ENCODE measurements at regions of chr17 and their contacts with region 1.

Region 1: DNA sequence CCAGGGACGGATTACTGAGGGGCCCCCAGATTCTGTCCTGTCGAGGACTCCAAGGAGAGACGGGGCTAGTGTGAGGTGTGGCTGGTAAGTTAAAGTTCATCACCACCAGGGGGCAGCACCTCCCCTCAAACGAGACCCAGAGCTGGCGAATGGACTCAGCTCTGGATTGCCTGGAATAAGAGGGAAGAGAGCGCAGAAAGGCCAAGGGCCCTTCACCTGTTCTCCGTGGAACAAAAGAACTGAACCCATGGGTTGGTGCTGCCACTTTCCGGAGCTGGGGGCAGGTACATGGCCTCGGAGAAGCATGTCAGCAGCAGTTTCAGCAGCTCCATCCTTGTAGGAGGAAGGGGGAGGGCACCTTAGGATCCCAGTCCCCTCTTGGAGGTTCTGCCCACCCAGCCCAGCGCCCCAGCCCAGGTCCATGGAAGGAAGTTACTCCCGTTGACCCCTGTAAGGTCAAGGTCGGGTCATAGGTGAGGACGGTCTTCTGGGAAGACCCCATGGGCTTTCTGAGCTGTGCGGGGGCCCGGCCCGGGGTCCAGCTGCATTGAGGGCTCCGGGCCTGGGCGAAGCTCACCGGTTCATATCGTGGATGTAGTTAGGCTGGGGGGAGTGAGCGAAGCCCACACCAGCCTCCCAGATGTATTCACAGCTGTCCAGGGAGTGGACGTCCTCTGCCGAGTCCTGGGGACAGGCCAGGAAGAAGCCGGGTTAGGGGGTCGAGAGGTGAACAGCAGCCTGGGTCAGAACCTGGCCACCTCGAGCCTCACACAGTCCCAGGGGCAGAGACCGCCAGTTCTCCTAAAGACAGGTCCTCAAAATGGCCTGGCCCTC is 10.7 kb downstream of the HID1 start:
- DNase-seq: peak; percentile 74 to 93 (median 82)
- ATAC-seq: peak; percentile 79
- H3K4me3 ChIP-seq: no peak overlapping the region
- H3K4me3 Mint-ChIP-seq: peak overlapping the region; percentile 14
- H3K27ac ChIP-seq: no peak overlapping the region
- H3K27ac Mint-ChIP-seq: no peak overlapping the region
- H3K4me1 ChIP-seq: peaks cover 17% of the 10 kb centered on the region
- H3K4me1 Mint-ChIP-seq: peaks cover 4% of the 10 kb centered on the region
- H3K27me3 ChIP-seq: no peaks in the 10 kb centered on the region
- H3K27me3 Mint-ChIP-seq: no peaks in the 10 kb centered on the region
- CTCF ChIP-seq: peak; percentile 83

Region 2: DNA sequence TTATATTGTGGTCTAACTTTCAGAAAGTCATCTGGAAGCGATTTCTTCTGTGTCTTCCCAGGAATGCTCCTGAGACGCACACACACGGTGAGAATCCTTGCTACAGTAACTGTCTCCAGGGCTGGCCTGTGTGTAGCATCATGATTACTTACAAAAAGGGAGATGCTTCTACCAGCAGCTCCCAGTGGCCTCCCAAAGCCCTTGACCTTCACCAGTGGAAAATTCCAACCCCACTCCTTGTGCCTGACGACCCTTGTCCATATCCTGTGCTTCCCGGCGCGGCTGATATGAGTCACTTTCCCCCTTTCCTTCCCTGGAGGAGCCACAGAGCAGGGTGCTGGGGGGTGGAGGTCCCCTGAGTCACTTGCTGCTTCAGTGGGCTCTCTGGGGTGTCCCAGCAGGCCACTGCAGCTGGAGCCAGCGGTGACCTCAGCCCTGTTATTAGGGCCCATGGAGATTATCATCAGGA is 163.6 kb before region 1 on chr17:
- CTCF ChIA-PET with region 1: no interaction called
- POLR2A ChIA-PET with region 1: no interaction called
- intact Hi-C with region 1: loop called (anchors 10 kb)
- DNase-seq: no peak
- ATAC-seq: no peak
- H3K4me3 ChIP-seq: no peak overlapping the region
- H3K4me3 Mint-ChIP-seq: no peak overlapping the region
- H3K27ac ChIP-seq: no peak overlapping the region
- H3K27ac Mint-ChIP-seq: no peak overlapping the region
- H3K4me1 ChIP-seq: no peaks in the 10 kb centered on the region
- H3K4me1 Mint-ChIP-seq: no peaks in the 10 kb centered on the region
- H3K27me3 ChIP-seq: no peaks in the 10 kb centered on the region
- H3K27me3 Mint-ChIP-seq: no peaks in the 10 kb centered on the region
- CTCF ChIP-seq: no peak

Region 3: GRCh38 chr17:74822939-74823367 is 138.9 kb before region 1 on chr17:
- CTCF ChIA-PET with region 1: no interaction called
- POLR2A ChIA-PET with region 1: no interaction called
- intact Hi-C with region 1: no loop called
- DNase-seq: no peak
- ATAC-seq: no peak
- H3K4me3 ChIP-seq: no peak overlapping the region
- H3K4me3 Mint-ChIP-seq: no peak overlapping the region
- H3K27ac ChIP-seq: no peak overlapping the region
- H3K27ac Mint-ChIP-seq: no peak overlapping the region
- H3K4me1 ChIP-seq: no peaks in the 10 kb centered on the region
- H3K4me1 Mint-ChIP-seq: no peaks in the 10 kb centered on the region
- H3K27me3 ChIP-seq: no peaks in the 10 kb centered on the region
- H3K27me3 Mint-ChIP-seq: no peaks in the 10 kb centered on the region
- CTCF ChIP-seq: no peak

Region 4: GRCh38 chr17:74972107-74972972 is 10.5 kb after region 1 on chr17 and contains the start of gene HID1:
- CTCF ChIA-PET with region 1: interaction called, 22 read pairs
- POLR2A ChIA-PET with region 1: interaction called, 5 read pairs
- intact Hi-C with region 1: no loop called
- DNase-seq: peak; percentile 74 to 90 (median 81)
- ATAC-seq: peak; percentile 88
- H3K4me3 ChIP-seq: peak within 1 kb of the TSS; percentile 59
- H3K4me3 Mint-ChIP-seq: peak within 1 kb of the TSS; percentile 89
- H3K27ac ChIP-seq: no peak within 1 kb of the TSS
- H3K27ac Mint-ChIP-seq: peak within 1 kb of the TSS; percentile 55
- H3K4me1 ChIP-seq: peaks cover 21% of the 10 kb centered on the region
- H3K4me1 Mint-ChIP-seq: peaks cover 5% of the 10 kb centered on the region
- H3K27me3 ChIP-seq: peaks cover 4 to 14% of the 10 kb centered on the region in 2 experiments
- H3K27me3 Mint-ChIP-seq: peaks cover 4% of the 10 kb centered on the region
- CTCF ChIP-seq: no peak
- total RNA-seq, gene HID1: 31.8 to 31.9 TPM

Region 5: GRCh38 chr17:75006653-75007052 is 44.8 kb after region 1 on chr17:
- CTCF ChIA-PET with region 1: interaction called, 51 read pairs
- POLR2A ChIA-PET with region 1: interaction called, 3 read pairs
- intact Hi-C with region 1: loop called in 1 of 2 experiments (anchors 2 kb)
- DNase-seq: no peak
- ATAC-seq: no peak
- H3K4me3 ChIP-seq: no peak overlapping the region
- H3K4me3 Mint-ChIP-seq: no peak overlapping the region
- H3K27ac ChIP-seq: no peak overlapping the region
- H3K27ac Mint-ChIP-seq: no peak overlapping the region
- H3K4me1 ChIP-seq: no peaks in the 10 kb centered on the region
- H3K4me1 Mint-ChIP-seq: no peaks in the 10 kb centered on the region
- H3K27me3 ChIP-seq: peaks cover 0 to 4% of the 10 kb centered on the region in 2 experiments
- H3K27me3 Mint-ChIP-seq: no peaks in the 10 kb centered on the region
- CTCF ChIP-seq: no peak

Region 6: DNA sequence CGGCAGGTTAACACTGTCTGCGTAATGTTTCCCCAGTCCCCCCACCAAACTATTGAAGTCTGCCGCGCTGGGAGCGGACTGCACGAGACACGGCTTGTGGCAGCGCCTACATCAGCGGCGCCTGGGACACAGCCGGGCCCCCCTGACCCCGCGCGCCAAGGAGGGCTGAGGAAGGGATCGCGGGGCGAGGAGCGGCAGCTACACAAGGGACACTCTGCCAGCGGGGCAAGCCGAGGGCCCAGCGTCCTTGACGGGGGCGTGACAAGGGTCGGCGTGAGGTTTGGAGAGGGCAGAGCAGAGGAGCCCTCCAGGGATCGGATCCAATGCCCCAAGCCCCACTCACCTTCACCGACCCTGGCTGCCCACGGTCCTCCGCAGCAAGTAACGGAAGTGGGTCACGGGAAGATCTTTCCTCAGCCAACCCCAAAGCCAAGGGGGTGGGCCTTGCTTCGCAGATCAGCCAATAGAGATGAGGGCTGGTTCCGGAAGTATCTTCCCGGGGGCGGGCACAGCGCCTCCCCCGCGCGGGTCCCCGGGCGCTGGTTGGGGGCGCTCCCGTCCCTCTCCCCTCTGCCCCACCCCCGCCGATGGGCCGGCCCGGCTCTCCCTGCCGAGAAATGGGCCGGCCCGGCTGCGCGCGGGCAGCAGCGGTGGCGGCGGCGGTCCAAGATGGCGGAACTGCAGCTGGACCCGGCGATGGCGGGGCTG is 84.9 kb after region 1 on chr17 and contains the starts of genes ATP5PD and KCTD2:
- CTCF ChIA-PET with region 1: interaction called, 5 read pairs
- POLR2A ChIA-PET with region 1: interaction called, 3 read pairs
- intact Hi-C with region 1: loop called (anchors 5 kb)
- DNase-seq: peak; percentile 83 to 97 (median 92)
- ATAC-seq: peak; percentile 92
- H3K4me3 ChIP-seq: peak within 1 kb of the TSS; percentile 84
- H3K4me3 Mint-ChIP-seq: peak within 1 kb of the TSS; percentile 100
- H3K27ac ChIP-seq: peak within 1 kb of the TSS; percentile 82 to 84
- H3K27ac Mint-ChIP-seq: peak within 1 kb of the TSS; percentile 100
- H3K4me1 ChIP-seq: peaks cover 20% of the 10 kb centered on the region
- H3K4me1 Mint-ChIP-seq: peaks cover 52% of the 10 kb centered on the region
- H3K27me3 ChIP-seq: no peaks in the 10 kb centered on the region
- H3K27me3 Mint-ChIP-seq: no peaks in the 10 kb centered on the region
- CTCF ChIP-seq: no peak
- total RNA-seq, gene ATP5PD: 98.5 to 112 TPM
- total RNA-seq, gene KCTD2: 26.1 to 28.0 TPM

Region 7: GRCh38 chr17:75205037-75205792 is 243.3 kb after region 1 on chr17 and contains the start of gene NUP85:
- CTCF ChIA-PET with region 1: interaction called, 6 read pairs
- POLR2A ChIA-PET with region 1: interaction called, 11 read pairs
- intact Hi-C with region 1: loop called (anchors 1 kb)
- DNase-seq: peak; percentile 87 to 95 (median 90)
- ATAC-seq: peak; percentile 89
- H3K4me3 ChIP-seq: peak within 1 kb of the TSS; percentile 95
- H3K4me3 Mint-ChIP-seq: peak within 1 kb of the TSS; percentile 96
- H3K27ac ChIP-seq: peak within 1 kb of the TSS; percentile 91 to 94
- H3K27ac Mint-ChIP-seq: peak within 1 kb of the TSS; percentile 95
- H3K4me1 ChIP-seq: peaks cover 28% of the 10 kb centered on the region
- H3K4me1 Mint-ChIP-seq: peaks cover 27% of the 10 kb centered on the region
- H3K27me3 ChIP-seq: no peaks in the 10 kb centered on the region
- H3K27me3 Mint-ChIP-seq: no peaks in the 10 kb centered on the region
- CTCF ChIP-seq: no peak
- total RNA-seq, gene NUP85: 84.7 to 89.2 TPM